Activated naive CD4-positive, alpha-beta T cell treated with anti-CD3 and anti-CD28 coated beads, Interleukin-2, amount 10 ng/mL, durations not matched to agents 7 days and 5 days (primary cell): ENCODE measurements at regions of chr17 and their contacts with region 1.

Region 1: DNA sequence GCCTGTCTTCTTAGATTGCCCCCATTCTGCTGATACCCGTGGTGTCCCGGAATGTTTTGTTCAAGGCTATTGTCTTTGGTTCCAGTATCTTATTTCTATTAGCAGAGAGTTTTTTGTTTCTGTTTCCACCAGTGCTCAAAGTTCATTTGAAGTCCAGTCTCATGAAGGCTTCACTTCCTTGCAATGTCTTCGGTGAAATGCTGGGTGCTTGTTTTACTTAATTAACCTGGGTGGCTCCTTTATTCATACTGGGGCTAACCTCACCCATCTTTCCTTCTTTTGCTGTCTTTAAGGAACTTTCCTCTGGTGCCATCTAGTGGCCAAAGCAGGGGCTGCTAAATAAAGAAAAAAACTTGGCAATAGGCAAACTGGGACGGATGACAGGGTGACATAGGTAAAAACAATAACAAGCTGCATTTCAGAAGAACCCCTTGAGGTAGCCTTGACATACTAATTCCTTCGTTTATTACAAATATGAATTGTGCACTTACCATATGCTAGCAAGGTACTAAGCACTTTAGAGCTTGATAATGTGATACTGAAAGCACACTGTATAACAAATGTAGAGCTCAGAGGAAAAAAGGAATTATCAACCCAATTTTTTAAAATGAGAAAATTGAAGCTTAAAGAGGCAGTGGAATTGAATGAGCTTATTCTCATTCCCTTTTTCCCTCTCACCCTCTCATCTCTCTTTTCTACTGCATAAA is 2.8 kb upstream of the SMIM36 start:
- DNase-seq: peak; percentile 77
- H3K4me3 Mint-ChIP-seq: no peak overlapping the region
- H3K27ac Mint-ChIP-seq: no peak overlapping the region
- H3K4me1 Mint-ChIP-seq: peaks cover 5% of the 10 kb centered on the region
- H3K27me3 Mint-ChIP-seq: peaks cover 8% of the 10 kb centered on the region

Region 2: GRCh38 chr17:55356434-55357328 is 157.4 kb before region 1 on chr17:
- CTCF ChIA-PET with region 1: interaction called, 33 read pairs
- DNase-seq: peak; percentile 85
- H3K4me3 Mint-ChIP-seq: no peak overlapping the region
- H3K27ac Mint-ChIP-seq: no peak overlapping the region
- H3K4me1 Mint-ChIP-seq: no peaks in the 10 kb centered on the region
- H3K27me3 Mint-ChIP-seq: peaks cover 20% of the 10 kb centered on the region

Region 3: GRCh38 chr17:55458977-55459376 is 55.1 kb before region 1 on chr17:
- CTCF ChIA-PET with region 1: no interaction called
- DNase-seq: no peak
- H3K4me3 Mint-ChIP-seq: no peak overlapping the region
- H3K27ac Mint-ChIP-seq: no peak overlapping the region
- H3K4me1 Mint-ChIP-seq: peaks cover 19% of the 10 kb centered on the region
- H3K27me3 Mint-ChIP-seq: no peaks in the 10 kb centered on the region

Region 4: GRCh38 chr17:55487695-55488429 is 26.2 kb before region 1 on chr17:
- CTCF ChIA-PET with region 1: no interaction called
- DNase-seq: no peak
- H3K4me3 Mint-ChIP-seq: no peak overlapping the region
- H3K27ac Mint-ChIP-seq: no peak overlapping the region
- H3K4me1 Mint-ChIP-seq: no peaks in the 10 kb centered on the region
- H3K27me3 Mint-ChIP-seq: peaks cover 20% of the 10 kb centered on the region